Activated naive CD4-positive, alpha-beta T cell treated with anti-CD3 and anti-CD28 coated beads, Interleukin-2, amount 10 ng/mL, durations not matched to agents 7 days and 5 days (primary cell): ENCODE measurements at regions of chr4 and their contacts with region 1.

Region 1: GRCh38 chr4:7335344-7336069 is 99.2 kb downstream of the PSAPL1 start:
- DNase-seq: peak; percentile 75
- H3K4me3 Mint-ChIP-seq: no peak overlapping the region
- H3K27ac Mint-ChIP-seq: no peak overlapping the region
- H3K4me1 Mint-ChIP-seq: no peaks in the 10 kb centered on the region
- H3K27me3 Mint-ChIP-seq: no peaks in the 10 kb centered on the region

Region 2: GRCh38 chr4:7324651-7325121 is 10.8 kb before region 1 on chr4:
- CTCF ChIA-PET with region 1: interaction called, 12 read pairs
- DNase-seq: no peak
- H3K4me3 Mint-ChIP-seq: no peak overlapping the region
- H3K27ac Mint-ChIP-seq: no peak overlapping the region
- H3K4me1 Mint-ChIP-seq: no peaks in the 10 kb centered on the region
- H3K27me3 Mint-ChIP-seq: no peaks in the 10 kb centered on the region